ENCODE measurements at regions of chr4 and their contacts with region 1.

Region 1: GRCh38 chr4:110049951-110050925 is 137.6 kb downstream of the EGF start:
- DNase-seq: peak; percentile 21
- H3K4me3 ChIP-seq: no peak overlapping the region
- H3K27ac ChIP-seq: no peak overlapping the region
- H3K4me1 ChIP-seq: peaks cover 9% of the 10 kb centered on the region
- H3K27me3 ChIP-seq: no peaks in the 10 kb centered on the region
- CTCF ChIP-seq: peak; percentile 81 to 88

Region 2: DNA sequence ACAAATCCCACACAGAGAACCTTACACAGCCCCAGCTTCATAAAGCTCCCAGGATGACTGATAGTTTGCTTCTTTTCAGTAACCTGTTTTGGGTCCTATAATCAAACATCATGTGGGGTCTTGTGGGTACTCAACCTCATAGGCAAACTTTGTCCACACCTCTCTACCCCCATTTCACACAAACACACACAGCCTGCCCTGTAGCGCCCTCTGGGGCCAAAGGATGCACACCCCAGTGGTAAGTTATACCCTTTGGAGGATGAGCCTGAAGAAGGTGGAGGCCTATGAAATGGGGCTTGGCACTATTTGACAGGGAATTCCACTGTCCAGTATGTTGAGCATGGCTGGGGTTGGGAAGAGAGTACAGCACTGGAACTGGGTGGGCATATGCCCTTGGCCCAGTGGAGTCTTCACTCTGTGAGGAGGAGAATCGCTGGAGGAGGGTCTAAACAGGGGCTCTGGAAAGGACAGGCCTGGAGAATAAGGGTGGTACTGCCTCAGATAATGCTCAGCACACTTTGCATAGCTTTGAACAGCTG is 717.2 kb before region 1 on chr4:
- CTCF ChIA-PET with region 1: no interaction called
- dilution Hi-C with region 1: no loop called
- in situ Hi-C with region 1: no loop called
- intact Hi-C with region 1: no loop called
- DNase-seq: no peak
- H3K4me3 ChIP-seq: no peak overlapping the region
- H3K27ac ChIP-seq: no peak overlapping the region
- H3K4me1 ChIP-seq: no peaks in the 10 kb centered on the region
- H3K27me3 ChIP-seq: no peaks in the 10 kb centered on the region
- CTCF ChIP-seq: peak; percentile 11 to 28

Region 3: GRCh38 chr4:109931318-109931717 is 118.9 kb before region 1 on chr4:
- CTCF ChIA-PET with region 1: no interaction called
- dilution Hi-C with region 1: no loop called
- in situ Hi-C with region 1: no loop called
- intact Hi-C with region 1: no loop called
- DNase-seq: no peak
- H3K4me3 ChIP-seq: no peak overlapping the region
- H3K27ac ChIP-seq: no peak overlapping the region
- H3K4me1 ChIP-seq: no peaks in the 10 kb centered on the region
- H3K27me3 ChIP-seq: no peaks in the 10 kb centered on the region
- CTCF ChIP-seq: no peak

Region 4: DNA sequence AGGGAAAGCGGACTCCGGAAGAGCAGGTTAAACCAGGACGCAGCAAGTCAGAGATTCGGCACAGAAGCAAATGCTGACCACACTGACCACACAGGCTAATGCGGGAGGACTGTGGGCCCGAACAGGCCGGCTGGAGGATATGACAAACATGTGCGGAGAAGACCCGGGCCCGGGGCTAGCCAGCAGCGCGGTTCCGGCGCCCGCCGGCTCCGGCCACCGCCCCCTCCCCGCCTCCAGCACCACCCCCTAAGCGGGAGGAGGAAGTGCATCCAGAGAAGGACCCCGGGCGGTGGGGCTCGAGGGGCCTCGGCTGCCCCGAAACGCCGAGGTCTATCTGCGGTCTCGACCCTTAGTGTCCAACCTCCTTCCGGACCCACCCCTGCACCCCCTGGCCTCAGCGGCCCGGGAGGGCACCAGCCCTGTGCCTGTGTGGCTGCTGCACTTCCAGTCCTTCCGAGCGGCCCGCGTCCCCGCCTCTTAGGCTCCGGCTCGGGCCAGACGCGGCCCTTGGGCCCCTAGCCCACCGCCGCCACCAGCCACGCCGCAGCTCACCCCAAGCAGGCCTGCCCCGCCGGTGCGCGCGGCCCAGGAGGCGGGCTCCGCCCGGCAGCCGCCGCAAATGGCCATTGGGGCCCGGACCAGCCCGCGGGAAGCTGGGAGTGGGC is 146.1 kb after region 1 on chr4:
- CTCF ChIA-PET with region 1: no interaction called
- dilution Hi-C with region 1: no loop called
- in situ Hi-C with region 1: loop called in 1 of 2 experiments (anchors 10 kb)
- intact Hi-C with region 1: loop called (anchors 1 kb)
- DNase-seq: peak; percentile 40
- H3K4me3 ChIP-seq: peak overlapping the region; percentile 62 to 82 (median 78)
- H3K27ac ChIP-seq: peak overlapping the region; percentile 71
- H3K4me1 ChIP-seq: peaks cover 29% of the 10 kb centered on the region
- H3K27me3 ChIP-seq: no peaks in the 10 kb centered on the region
- CTCF ChIP-seq: no peak

Region 5: DNA sequence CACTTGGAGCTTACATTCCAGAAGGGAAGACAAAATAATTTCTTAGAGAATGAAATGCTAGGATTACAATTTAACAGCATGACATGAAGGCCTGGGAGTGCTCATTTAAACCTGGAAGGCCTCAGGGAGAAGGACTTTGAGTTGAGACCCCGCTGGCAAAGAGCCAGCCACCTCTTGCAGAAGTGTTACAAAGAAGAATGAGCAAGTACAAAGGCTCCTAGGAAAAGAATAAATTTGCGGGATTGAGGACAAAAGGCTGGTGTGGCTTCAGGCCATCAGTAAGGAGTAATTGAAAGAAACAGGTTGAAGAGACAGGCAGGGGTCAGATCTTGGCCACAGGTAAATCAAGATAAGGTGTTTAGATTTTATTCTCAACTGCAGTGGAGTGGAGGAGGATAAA is 151.3 kb after region 1 on chr4:
- CTCF ChIA-PET with region 1: no interaction called
- dilution Hi-C with region 1: no loop called
- in situ Hi-C with region 1: loop called in 1 of 2 experiments (anchors 10 kb)
- intact Hi-C with region 1: loop called (anchors 1 kb)
- DNase-seq: no peak
- H3K4me3 ChIP-seq: no peak overlapping the region
- H3K27ac ChIP-seq: no peak overlapping the region
- H3K4me1 ChIP-seq: peaks cover 4% of the 10 kb centered on the region
- H3K27me3 ChIP-seq: no peaks in the 10 kb centered on the region
- CTCF ChIP-seq: no peak

Region 6: DNA sequence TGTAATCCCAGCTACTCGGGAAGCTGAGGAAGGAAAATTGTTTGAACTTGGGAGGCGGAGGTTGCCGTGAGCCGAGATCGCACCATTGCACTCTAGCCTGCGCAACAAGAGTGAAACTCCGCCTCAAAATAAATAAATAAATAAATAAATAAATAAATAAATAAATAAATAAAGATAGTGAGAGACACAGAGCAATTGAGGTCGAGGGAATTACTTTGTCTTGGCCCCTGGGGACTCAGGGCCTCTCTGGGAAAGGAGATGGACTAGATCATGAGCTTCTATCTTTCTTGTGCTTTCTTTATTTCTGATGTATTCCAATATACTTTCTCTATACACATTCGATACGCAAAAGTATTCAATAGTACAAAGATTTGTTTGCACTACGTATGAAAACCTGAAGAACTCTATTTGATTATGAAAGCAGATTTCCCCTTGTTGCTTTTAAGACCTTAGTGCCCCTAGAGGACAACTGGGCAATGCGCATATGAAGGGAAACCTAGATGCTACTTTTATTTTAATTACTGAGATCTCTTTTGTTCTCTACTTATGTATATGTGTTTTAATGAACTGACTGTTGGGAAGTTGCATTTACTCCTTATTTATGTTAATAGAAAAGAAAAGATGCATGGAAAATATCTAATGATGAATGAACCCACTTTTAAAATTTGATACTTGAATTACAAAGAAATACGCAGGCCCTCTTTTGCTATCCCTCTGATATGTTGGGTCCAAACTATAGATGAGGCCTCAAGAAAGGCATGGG is 160.9 kb after region 1 on chr4:
- CTCF ChIA-PET with region 1: no interaction called
- dilution Hi-C with region 1: no loop called
- in situ Hi-C with region 1: loop called in 1 of 2 experiments (anchors 10 kb)
- intact Hi-C with region 1: loop called (anchors 1 kb)
- DNase-seq: peak; percentile 32
- H3K4me3 ChIP-seq: no peak overlapping the region
- H3K27ac ChIP-seq: no peak overlapping the region
- H3K4me1 ChIP-seq: no peaks in the 10 kb centered on the region
- H3K27me3 ChIP-seq: no peaks in the 10 kb centered on the region
- CTCF ChIP-seq: peak; percentile 81 to 93

Region 7: GRCh38 chr4:110510955-110511544 is 460.8 kb after region 1 on chr4:
- CTCF ChIA-PET with region 1: no interaction called
- dilution Hi-C with region 1: no loop called
- in situ Hi-C with region 1: no loop called
- intact Hi-C with region 1: loop called (anchors 5 kb)
- DNase-seq: peak; percentile 45
- H3K4me3 ChIP-seq: no peak overlapping the region
- H3K27ac ChIP-seq: no peak overlapping the region
- H3K4me1 ChIP-seq: peaks cover 3% of the 10 kb centered on the region
- H3K27me3 ChIP-seq: peaks cover 3% of the 10 kb centered on the region
- CTCF ChIP-seq: peak; percentile 57 to 63

Measured in mammary epithelial cell (primary cell).